Natural killer cell (primary cell): ENCODE measurements at regions of chr16 and their contacts with region 1.

Region 1: GRCh38 chr16:70438969-70439862 is at the start of gene ST3GAL2:
- DNase-seq: peak; percentile 85 to 95
- ATAC-seq: peak; percentile 96 to 99 (median 96)
- H3K4me3 ChIP-seq: peak within 1 kb of the TSS; percentile 66
- H3K4me3 Mint-ChIP-seq: peak within 1 kb of the TSS; percentile 96
- H3K27ac ChIP-seq: peak within 1 kb of the TSS; percentile 41
- H3K27ac Mint-ChIP-seq: peak within 1 kb of the TSS; percentile 74 to 89
- H3K4me1 ChIP-seq: peaks cover 25% of the 10 kb centered on the region
- H3K4me1 Mint-ChIP-seq: peaks cover 19 to 24% of the 10 kb centered on the region in 2 donors
- H3K27me3 ChIP-seq: no peaks in the 10 kb centered on the region
- H3K27me3 Mint-ChIP-seq: no peaks in the 10 kb centered on the region
- CTCF ChIP-seq: no peak
- total RNA-seq, gene ST3GAL2: 25.9 to 39.1 (median 36.9) TPM

Region 2: DNA sequence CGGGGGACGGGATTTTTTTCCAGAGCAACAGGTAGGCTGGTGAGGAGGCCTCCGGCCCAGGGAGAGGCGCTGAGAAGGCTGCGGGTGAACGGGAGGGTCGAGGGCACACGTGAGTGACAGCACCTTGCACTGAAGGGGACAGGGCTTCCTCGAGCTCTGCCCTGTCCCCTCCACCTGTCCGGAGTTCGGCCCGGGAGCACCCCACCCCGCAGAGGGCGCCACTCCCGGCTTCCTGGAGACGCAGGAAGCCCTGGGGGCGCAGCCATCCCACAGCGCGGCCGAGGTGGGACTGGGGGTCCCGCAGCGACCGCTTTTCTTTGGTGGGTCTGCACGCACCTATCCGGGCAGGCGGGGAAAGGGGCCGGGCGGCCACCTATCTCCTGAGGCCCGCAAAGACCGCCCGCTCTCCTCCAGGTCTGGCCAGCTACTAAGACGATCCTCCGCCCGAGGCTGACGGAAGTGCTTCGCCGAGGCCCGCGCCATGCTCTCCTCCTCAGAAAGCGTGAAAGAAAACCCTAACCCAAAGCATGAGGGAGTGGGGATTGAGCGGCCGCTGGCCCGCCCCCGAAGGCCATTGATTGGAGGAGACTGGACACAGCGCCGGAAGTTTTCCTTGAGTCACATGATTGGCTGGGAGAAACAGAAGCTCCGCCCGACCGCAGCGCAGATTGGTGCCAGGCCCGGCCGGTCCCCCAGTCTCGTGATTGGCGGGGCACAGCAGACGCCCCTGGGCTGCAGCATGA is 58.2 kb before region 1 on chr16:
- intact Hi-C with region 1: loop called (anchors 1 kb)
- DNase-seq: peak; percentile 92 to 98
- ATAC-seq: peak; percentile 93 to 98 (median 95)
- H3K4me3 ChIP-seq: peak overlapping the region; percentile 75
- H3K4me3 Mint-ChIP-seq: peak overlapping the region; percentile 99
- H3K27ac ChIP-seq: peak overlapping the region; percentile 69
- H3K27ac Mint-ChIP-seq: peak overlapping the region; percentile 90 to 91
- H3K4me1 ChIP-seq: peaks cover 29% of the 10 kb centered on the region
- H3K4me1 Mint-ChIP-seq: peaks cover 4 to 6% of the 10 kb centered on the region in 2 donors
- H3K27me3 ChIP-seq: no peaks in the 10 kb centered on the region
- H3K27me3 Mint-ChIP-seq: no peaks in the 10 kb centered on the region
- CTCF ChIP-seq: peak; percentile 17

Region 3: DNA sequence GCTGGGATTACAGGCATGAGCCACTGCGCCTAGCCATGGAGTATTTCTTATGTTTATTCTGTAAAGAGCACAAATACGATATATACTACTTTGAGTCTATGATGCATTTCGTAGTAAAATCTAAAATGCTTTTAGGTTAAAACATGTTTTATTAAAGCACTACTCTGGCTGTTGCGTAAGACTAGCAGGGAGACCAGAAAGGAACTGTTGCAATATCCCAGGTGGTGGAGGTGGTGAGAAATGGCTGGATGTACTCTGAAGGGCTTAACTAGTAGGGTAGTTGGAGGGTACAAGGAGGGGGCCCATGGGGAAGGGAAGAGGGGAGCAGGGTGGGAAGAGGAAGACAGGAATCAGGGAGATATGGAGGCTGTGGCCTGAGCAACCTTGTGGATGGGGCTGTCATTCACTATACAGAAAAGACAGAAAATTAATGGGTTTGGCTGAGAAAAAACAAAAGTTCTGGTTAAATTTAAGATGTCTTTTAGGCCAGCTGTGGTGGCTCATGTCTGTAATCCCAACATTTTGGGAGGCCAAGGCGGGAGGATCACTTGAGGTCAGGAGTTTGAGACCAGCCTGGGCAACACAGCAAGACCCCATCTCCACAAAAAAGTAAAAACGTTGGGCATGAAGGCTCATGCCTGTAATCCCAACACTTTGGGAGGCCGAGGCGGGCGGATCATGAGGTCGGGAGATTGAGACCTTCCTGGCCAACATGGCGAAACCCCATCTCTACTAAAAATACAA is 36.1 kb before region 1 on chr16:
- intact Hi-C with region 1: loop called (anchors 5 kb)
- DNase-seq: no peak
- ATAC-seq: no peak
- H3K4me3 ChIP-seq: no peak overlapping the region
- H3K4me3 Mint-ChIP-seq: peak overlapping the region; percentile 73
- H3K27ac ChIP-seq: no peak overlapping the region
- H3K27ac Mint-ChIP-seq: peak overlapping the region; percentile 53 to 86
- H3K4me1 ChIP-seq: peaks cover 28% of the 10 kb centered on the region
- H3K4me1 Mint-ChIP-seq: peaks cover 35 to 40% of the 10 kb centered on the region in 2 donors
- H3K27me3 ChIP-seq: no peaks in the 10 kb centered on the region
- H3K27me3 Mint-ChIP-seq: no peaks in the 10 kb centered on the region
- CTCF ChIP-seq: no peak

Region 4: DNA sequence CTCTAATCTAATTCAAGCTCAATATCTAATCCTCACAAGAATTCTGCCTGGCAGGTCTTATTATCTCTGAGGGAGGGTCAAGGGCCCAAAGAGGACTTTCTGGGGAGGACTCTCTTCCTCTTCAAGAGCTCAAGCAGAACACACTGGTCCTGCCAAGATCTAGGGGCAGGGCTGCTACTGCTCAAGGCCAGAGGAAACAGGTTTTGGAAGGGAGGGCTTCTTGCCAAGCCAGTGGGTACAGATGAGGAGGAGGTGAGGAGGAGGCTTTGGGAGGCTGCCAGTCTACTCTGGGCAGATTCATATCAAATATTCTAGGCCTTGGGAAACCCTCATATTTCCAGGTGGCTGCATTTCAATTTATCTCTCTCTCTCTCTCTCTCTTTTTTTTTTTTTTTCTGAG is 155.4 kb after region 1 on chr16:
- intact Hi-C with region 1: no loop called
- DNase-seq: no peak
- ATAC-seq: no peak
- H3K4me3 ChIP-seq: no peak overlapping the region
- H3K4me3 Mint-ChIP-seq: no peak overlapping the region
- H3K27ac ChIP-seq: no peak overlapping the region
- H3K27ac Mint-ChIP-seq: no peak overlapping the region
- H3K4me1 ChIP-seq: no peaks in the 10 kb centered on the region
- H3K4me1 Mint-ChIP-seq: no peaks in the 10 kb centered on the region
- H3K27me3 ChIP-seq: no peaks in the 10 kb centered on the region
- H3K27me3 Mint-ChIP-seq: peaks cover 0 to 2% of the 10 kb centered on the region in 2 donors
- CTCF ChIP-seq: no peak